Naive thymus-derived CD4-positive, alpha-beta T cell (primary cell): ENCODE measurements at regions of chr6 and their contacts with region 1.

Region 1: GRCh38 chr6:52577022-52577777 is at the start of gene TRAM2:
- DNase-seq: peak; percentile 67 to 86 (median 79)
- ATAC-seq: peak; percentile 90
- H3K4me3 ChIP-seq: peak within 1 kb of the TSS; percentile 76
- H3K4me3 Mint-ChIP-seq: peak within 1 kb of the TSS; percentile 83 to 95 (median 88)
- H3K27ac ChIP-seq: peak within 1 kb of the TSS; percentile 80
- H3K27ac Mint-ChIP-seq: peak within 1 kb of the TSS; percentile 72 to 93 (median 89)
- H3K4me1 ChIP-seq: peaks cover 27 to 34% of the 10 kb centered on the region in 2 donors
- H3K4me1 Mint-ChIP-seq: peaks cover 35 to 60% (median 49%) of the 10 kb centered on the region in 7 donors
- H3K27me3 ChIP-seq: no peaks in the 10 kb centered on the region
- H3K27me3 Mint-ChIP-seq: peaks cover 0 to 20% (median 0%) of the 10 kb centered on the region in 5 donors
- total RNA-seq, gene TRAM2: 8.9 to 10.9 (median 10.3) TPM

Region 2: GRCh38 chr6:52419809-52420670 is 157.2 kb before region 1 on chr6 and contains the start of gene EFHC1:
- CTCF ChIA-PET with region 1: no interaction called
- POLR2A ChIA-PET with region 1: interaction called, 6 read pairs
- intact Hi-C with region 1: loop called (anchors 1 kb)
- DNase-seq: peak; percentile 95 to 98 (median 97)
- ATAC-seq: peak; percentile 97
- H3K4me3 ChIP-seq: peak within 1 kb of the TSS; percentile 73
- H3K4me3 Mint-ChIP-seq: no peak within 1 kb of the TSS
- H3K27ac ChIP-seq: peak within 1 kb of the TSS; percentile 72
- H3K27ac Mint-ChIP-seq: peak within 1 kb of the TSS in 1 of 9 donors; percentile 96
- H3K4me1 ChIP-seq: peaks cover 13 to 19% of the 10 kb centered on the region in 2 donors
- H3K4me1 Mint-ChIP-seq: peaks cover 10 to 31% (median 24%) of the 10 kb centered on the region in 7 donors
- H3K27me3 ChIP-seq: no peaks in the 10 kb centered on the region
- H3K27me3 Mint-ChIP-seq: peaks cover 0 to 5% (median 0%) of the 10 kb centered on the region in 5 donors
- total RNA-seq, gene EFHC1: 2.4 to 13.8 (median 6.0) TPM

Region 3: GRCh38 chr6:52537001-52537753 is 40.0 kb before region 1 on chr6:
- CTCF ChIA-PET with region 1: no interaction called
- POLR2A ChIA-PET with region 1: no interaction called
- intact Hi-C with region 1: loop called in 1 of 2 experiments (anchors 2 kb)
- DNase-seq: peak in 1 of 9 donors; percentile 7
- ATAC-seq: peak; percentile 46
- H3K4me3 ChIP-seq: no peak overlapping the region
- H3K4me3 Mint-ChIP-seq: peak overlapping the region in 7 of 10 donors; percentile 11 to 52 (median 36)
- H3K27ac ChIP-seq: no peak overlapping the region
- H3K27ac Mint-ChIP-seq: peak overlapping the region in 7 of 9 donors; percentile 5 to 48 (median 37)
- H3K4me1 ChIP-seq: peaks cover 11 to 29% of the 10 kb centered on the region in 2 donors
- H3K4me1 Mint-ChIP-seq: peaks cover 36 to 63% (median 52%) of the 10 kb centered on the region in 7 donors
- H3K27me3 ChIP-seq: no peaks in the 10 kb centered on the region
- H3K27me3 Mint-ChIP-seq: no peaks in the 10 kb centered on the region

Region 4: GRCh38 chr6:52670502-52671409 is 93.6 kb after region 1 on chr6 and contains the start of gene TMEM14A:
- CTCF ChIA-PET with region 1: no interaction called
- POLR2A ChIA-PET with region 1: no interaction called
- intact Hi-C with region 1: loop called in 1 of 2 experiments (anchors 1 kb)
- DNase-seq: peak; percentile 81 to 94 (median 88)
- ATAC-seq: peak; percentile 96
- H3K4me3 ChIP-seq: peak within 1 kb of the TSS; percentile 74
- H3K4me3 Mint-ChIP-seq: peak within 1 kb of the TSS; percentile 86 to 97 (median 92)
- H3K27ac ChIP-seq: peak within 1 kb of the TSS; percentile 67
- H3K27ac Mint-ChIP-seq: peak within 1 kb of the TSS; percentile 52 to 94 (median 84)
- H3K4me1 ChIP-seq: peaks cover 12 to 15% of the 10 kb centered on the region in 2 donors
- H3K4me1 Mint-ChIP-seq: peaks cover 25 to 38% (median 35%) of the 10 kb centered on the region in 7 donors
- H3K27me3 ChIP-seq: no peaks in the 10 kb centered on the region
- H3K27me3 Mint-ChIP-seq: peaks cover 0 to 3% (median 0%) of the 10 kb centered on the region in 5 donors
- total RNA-seq, gene TMEM14A: 5.3 to 18.2 (median 8.0) TPM

Region 5: GRCh38 chr6:53794720-53795253 is 1217.6 kb after region 1 on chr6 and contains the start of gene LRRC1:
- CTCF ChIA-PET with region 1: no interaction called
- POLR2A ChIA-PET with region 1: no interaction called
- intact Hi-C with region 1: loop called (anchors 2 to 5 kb)
- DNase-seq: peak; percentile 61 to 94 (median 76)
- ATAC-seq: peak; percentile 78
- H3K4me3 ChIP-seq: peak within 1 kb of the TSS; percentile 96
- H3K4me3 Mint-ChIP-seq: peak within 1 kb of the TSS; percentile 93 to 98 (median 96)
- H3K27ac ChIP-seq: peak within 1 kb of the TSS; percentile 43
- H3K27ac Mint-ChIP-seq: peak within 1 kb of the TSS in 8 of 9 donors; percentile 75 to 91 (median 86)
- H3K4me1 ChIP-seq: peaks cover 7 to 13% of the 10 kb centered on the region in 2 donors
- H3K4me1 Mint-ChIP-seq: peaks cover 21 to 33% (median 28%) of the 10 kb centered on the region in 7 donors
- H3K27me3 ChIP-seq: peaks cover 0 to 8% of the 10 kb centered on the region in 2 donors
- H3K27me3 Mint-ChIP-seq: peaks cover 7 to 55% (median 18%) of the 10 kb centered on the region in 5 donors
- total RNA-seq, gene LRRC1: 1.2 to 3.6 (median 3.4) TPM